Heart left ventricle (tissue), 16 donors: ENCODE measurements at regions of chr9 and their contacts with region 1.

Region 1: DNA sequence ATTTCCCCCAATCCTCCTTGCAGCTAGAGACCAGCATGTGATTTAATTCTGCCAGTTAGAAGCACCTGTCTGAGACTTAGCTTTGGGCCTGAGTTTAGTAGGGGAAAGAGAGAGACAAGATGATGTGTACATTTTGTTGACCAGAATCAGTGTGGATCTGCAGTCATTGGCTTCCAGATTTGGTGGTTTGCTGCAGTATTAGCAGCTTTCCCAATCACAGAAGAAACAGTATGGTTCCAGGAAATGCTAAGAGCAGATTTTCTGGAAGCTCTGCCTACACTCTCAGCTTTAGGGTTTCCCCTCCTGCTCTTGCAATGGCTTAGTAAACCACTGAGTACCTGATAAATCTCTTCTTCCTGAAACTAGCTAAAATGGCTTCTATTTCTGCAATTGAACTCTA is 48.8 kb upstream of the FREM1 start:
- DNase-seq: no peak
- ATAC-seq: no peak
- H3K4me3 ChIP-seq: no peak overlapping the region
- H3K27ac ChIP-seq: no peak overlapping the region
- H3K4me1 ChIP-seq: peaks cover 0 to 23% (median 2%) of the 10 kb centered on the region in 12 donors
- H3K27me3 ChIP-seq: no peaks in the 10 kb centered on the region
- CTCF ChIP-seq: no peak
- POLR2A ChIP-seq: no peak

Region 2: GRCh38 chr9:14806941-14807520 is 152.0 kb before region 1 on chr9:
- intact Hi-C with region 1: no loop called
- DNase-seq: no peak
- ATAC-seq: no peak
- H3K4me3 ChIP-seq: no peak overlapping the region
- H3K27ac ChIP-seq: no peak overlapping the region
- H3K4me1 ChIP-seq: no peaks in the 10 kb centered on the region
- H3K27me3 ChIP-seq: no peaks in the 10 kb centered on the region
- CTCF ChIP-seq: no peak
- POLR2A ChIP-seq: no peak

Region 3: GRCh38 chr9:14888875-14889274 is 70.1 kb before region 1 on chr9:
- intact Hi-C with region 1: no loop called
- DNase-seq: no peak
- ATAC-seq: no peak
- H3K4me3 ChIP-seq: no peak overlapping the region
- H3K27ac ChIP-seq: no peak overlapping the region
- H3K4me1 ChIP-seq: no peaks in the 10 kb centered on the region
- H3K27me3 ChIP-seq: no peaks in the 10 kb centered on the region
- CTCF ChIP-seq: no peak
- POLR2A ChIP-seq: no peak

Region 4: GRCh38 chr9:15048772-15049171 is 89.8 kb after region 1 on chr9:
- intact Hi-C with region 1: loop called in 1 of 10 experiments (anchors 5 kb)
- DNase-seq: no peak
- ATAC-seq: no peak
- H3K4me3 ChIP-seq: no peak overlapping the region
- H3K27ac ChIP-seq: no peak overlapping the region
- H3K4me1 ChIP-seq: no peaks in the 10 kb centered on the region
- H3K27me3 ChIP-seq: no peaks in the 10 kb centered on the region
- CTCF ChIP-seq: no peak
- POLR2A ChIP-seq: no peak